ENCODE measurements at regions of chr10 and their contacts with region 1.

Region 1: DNA sequence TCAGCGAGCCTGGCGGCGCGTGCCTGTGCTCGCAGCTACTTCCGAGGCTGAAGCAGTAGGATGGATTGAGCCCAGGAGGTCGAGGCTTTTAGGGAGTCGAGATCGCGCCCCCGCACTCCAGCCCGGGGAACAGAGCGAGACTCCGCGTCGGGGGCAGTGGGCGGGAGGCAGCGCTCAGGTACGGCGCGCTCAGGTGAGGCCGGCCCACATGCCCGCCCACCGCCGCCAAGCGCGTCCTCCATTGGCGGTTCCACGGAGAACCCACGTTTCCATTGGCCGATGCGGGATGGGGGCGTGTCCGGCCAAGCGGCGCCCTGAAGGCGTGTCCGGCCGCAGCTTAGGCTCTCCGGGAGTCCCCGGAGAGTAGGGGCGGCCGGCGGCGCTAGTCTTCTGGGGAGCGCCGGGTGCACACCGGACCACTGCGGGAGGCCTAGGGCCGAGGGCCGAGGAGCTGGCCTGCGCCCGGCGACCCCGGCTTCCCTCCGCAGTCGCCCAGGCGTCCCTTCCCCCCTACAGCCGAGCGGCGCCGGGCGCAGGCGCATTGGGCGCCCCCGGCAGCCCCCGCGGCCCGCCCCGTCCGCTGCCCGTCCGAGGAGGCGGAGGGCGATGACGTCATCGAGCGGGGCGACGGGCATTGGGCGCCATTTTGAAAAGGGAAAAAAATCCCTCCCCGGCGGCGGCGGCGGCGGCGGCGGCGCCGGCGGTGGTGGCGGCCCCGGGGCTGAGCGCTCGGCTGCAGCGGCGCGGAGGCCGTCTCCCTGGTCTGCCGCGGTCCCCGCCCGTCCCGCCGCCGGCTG is at the start of gene PPP2R2D:
- DNase-seq: peak; percentile 93 to 99 (median 97)
- H3K4me3 ChIP-seq: peak within 1 kb of the TSS; percentile 83
- H3K4me3 Mint-ChIP-seq: peak within 1 kb of the TSS; percentile 85 to 96 (median 90)
- H3K27ac ChIP-seq: peak within 1 kb of the TSS; percentile 76
- H3K27ac Mint-ChIP-seq: peak within 1 kb of the TSS; percentile 80 to 98 (median 94)
- H3K4me1 ChIP-seq: peaks cover 64% of the 10 kb centered on the region
- H3K4me1 Mint-ChIP-seq: peaks cover 55 to 71% (median 62%) of the 10 kb centered on the region in 3 donors
- H3K27me3 ChIP-seq: no peaks in the 10 kb centered on the region
- H3K27me3 Mint-ChIP-seq: peaks cover 1 to 10% of the 10 kb centered on the region in 2 donors
- total RNA-seq, gene PPP2R2D: 23.5 to 24.5 TPM

Region 2: DNA sequence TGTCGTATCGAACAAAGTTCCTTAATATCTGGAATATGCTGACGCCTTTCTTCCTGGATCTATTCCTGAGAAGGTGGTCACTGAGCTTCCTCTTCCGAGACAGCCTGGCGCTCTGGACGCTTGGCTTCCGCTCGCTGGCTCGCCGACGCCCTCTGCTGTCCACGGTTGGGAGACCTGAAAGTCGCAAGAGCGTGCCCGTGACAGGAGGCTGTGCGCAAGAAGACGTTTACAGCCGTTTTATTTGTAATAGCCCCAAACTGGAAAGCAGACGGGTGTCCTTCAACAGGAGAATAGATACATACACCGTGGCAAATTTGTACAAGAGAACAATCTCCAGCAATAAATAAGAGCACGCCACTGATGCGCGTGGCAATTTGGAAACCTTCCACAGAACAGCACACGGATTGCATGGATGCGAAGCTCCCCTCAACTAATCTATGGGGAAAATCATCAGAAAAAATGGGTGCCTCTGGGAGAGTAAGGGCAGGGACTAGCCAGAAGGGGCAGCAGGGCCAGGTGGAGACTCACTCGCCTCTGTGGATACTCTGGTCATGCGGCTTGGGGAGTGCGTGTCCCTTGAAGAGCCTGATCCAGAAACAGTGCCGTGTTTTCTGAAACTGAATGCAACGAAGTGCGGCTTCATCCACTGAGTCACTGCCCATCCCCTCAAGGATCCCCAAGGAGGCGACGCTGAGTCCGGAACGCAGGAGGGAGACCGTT is 122.7 kb after region 1 on chr10:
- CTCF ChIA-PET with region 1: interaction called, 13 read pairs
- POLR2A ChIA-PET with region 1: no interaction called
- DNase-seq: peak; percentile 54 to 79 (median 62)
- H3K4me3 ChIP-seq: no peak overlapping the region
- H3K4me3 Mint-ChIP-seq: peak overlapping the region in 4 of 7 donors; percentile 13 to 55 (median 48)
- H3K27ac ChIP-seq: no peak overlapping the region
- H3K27ac Mint-ChIP-seq: peak overlapping the region in 1 of 8 donors; percentile 12
- H3K4me1 ChIP-seq: peaks cover 7% of the 10 kb centered on the region
- H3K4me1 Mint-ChIP-seq: peaks cover 6 to 11% (median 8%) of the 10 kb centered on the region in 3 donors
- H3K27me3 ChIP-seq: no peaks in the 10 kb centered on the region
- H3K27me3 Mint-ChIP-seq: peaks cover 15 to 31% of the 10 kb centered on the region in 2 donors

Measured in CD8-positive, alpha-beta memory T cell (primary cell).